ENCODE measurements at regions of chr10 and their contacts with region 1.

Region 1: DNA sequence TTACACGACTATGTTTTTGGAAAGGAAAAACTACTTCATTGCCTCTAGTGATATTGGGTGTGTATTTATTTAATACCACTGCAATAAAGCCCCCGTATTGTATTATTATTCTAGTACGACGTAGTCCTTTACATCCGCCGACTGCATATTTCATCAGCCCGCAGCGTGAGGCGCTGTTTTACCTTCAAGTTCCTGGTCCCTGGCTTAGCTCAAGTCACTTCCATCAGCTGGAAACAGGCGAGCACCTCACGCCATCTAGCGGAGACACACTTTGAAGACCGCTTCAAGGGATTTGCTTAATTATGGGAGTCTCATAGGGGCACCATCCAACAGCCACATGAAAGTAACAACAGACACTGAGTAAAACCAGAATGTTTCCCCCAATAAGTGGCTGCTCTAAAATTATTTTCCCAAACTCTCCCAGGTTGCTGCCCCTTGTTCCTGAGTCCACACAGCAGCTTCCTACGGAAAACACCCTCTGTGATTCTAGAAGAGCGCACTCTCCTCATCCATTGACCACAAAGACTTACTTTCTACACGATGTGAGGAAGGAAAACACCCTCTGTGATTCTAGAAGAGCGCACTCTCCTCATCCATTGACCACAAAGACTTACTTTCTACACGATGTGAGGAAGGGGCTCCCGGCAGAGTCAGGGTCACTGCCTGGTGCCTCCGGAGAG is 15.7 kb upstream of the ITIH2 start:
- DNase-seq: peak; percentile 77
- H3K27ac ChIP-seq: no peak overlapping the region
- CTCF ChIP-seq: peak; percentile 90

Region 2: GRCh38 chr10:7525314-7526016 is 161.9 kb before region 1 on chr10:
- CTCF ChIA-PET with region 1: interaction called, 28 read pairs
- POLR2A ChIA-PET with region 1: no interaction called
- DNase-seq: peak; percentile 66
- H3K27ac ChIP-seq: no peak overlapping the region
- CTCF ChIP-seq: peak; percentile 74